PC-3 (cell line): ENCODE measurements at regions of chr2 and their contacts with region 1.

Region 1: GRCh38 chr2:62340994-62341484 is 145.1 kb downstream of the B3GNT2 start:
- DNase-seq: peak; percentile 48
- ATAC-seq: peak; percentile 44
- H3K4me3 ChIP-seq: no peak overlapping the region
- H3K27ac ChIP-seq: no peak overlapping the region
- H3K4me1 ChIP-seq: peaks cover 3% of the 10 kb centered on the region; the same call in 1 of the 2 replicates
- H3K27me3 ChIP-seq: no peaks in the 10 kb centered on the region
- CTCF ChIP-seq: no peak

Region 2: DNA sequence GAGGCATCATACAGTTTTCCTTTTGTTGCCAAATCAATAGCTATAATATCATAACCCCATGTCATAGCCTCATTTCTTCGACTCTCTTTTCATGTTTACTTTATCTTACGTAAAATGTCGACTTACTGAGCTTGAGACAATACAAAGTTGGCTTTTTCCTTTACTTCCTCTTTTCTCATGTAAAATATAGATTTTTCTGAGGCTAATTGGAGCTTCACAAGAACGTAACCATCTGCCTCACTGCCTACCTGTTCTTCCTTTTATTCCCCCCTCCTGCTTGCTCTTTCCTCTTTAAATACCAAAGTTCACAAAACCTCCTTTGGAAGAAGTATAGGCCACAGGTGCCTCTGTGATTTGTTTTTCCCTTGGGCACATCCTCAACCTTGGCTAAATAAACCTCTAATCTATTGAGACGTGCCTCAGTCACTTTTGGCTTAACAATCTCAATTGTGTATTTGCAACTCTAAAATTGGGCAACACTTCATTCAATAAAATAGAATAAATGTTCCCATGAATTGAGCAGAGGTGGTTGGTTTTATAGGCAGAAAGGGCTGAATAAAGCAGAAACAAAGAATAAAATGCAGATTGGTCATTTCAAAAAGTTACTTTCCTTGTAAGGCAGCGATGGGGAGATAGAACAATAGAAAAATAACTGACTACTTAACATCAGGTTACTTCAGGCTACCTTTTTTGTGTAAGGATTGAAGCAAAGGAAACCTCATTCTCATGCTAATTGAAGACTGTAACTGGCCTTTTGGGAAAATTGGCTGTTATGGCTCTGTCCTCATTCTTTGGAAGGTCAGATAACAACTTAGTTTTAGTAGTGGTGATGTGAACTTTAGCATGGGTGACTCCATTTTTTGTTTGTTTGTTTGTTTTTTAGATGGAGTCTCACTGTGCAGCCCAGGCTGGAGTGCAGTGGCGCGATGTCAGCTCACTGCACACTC is 414.2 kb before region 1 on chr2:
- CTCF ChIA-PET with region 1: no interaction called
- POLR2A ChIA-PET with region 1: no interaction called
- intact Hi-C with region 1: no loop called
- DNase-seq: no peak
- ATAC-seq: no peak
- H3K4me3 ChIP-seq: no peak overlapping the region
- H3K27ac ChIP-seq: no peak overlapping the region
- H3K4me1 ChIP-seq: no peaks in the 10 kb centered on the region
- H3K27me3 ChIP-seq: no peaks in the 10 kb centered on the region
- CTCF ChIP-seq: no peak

Region 3: DNA sequence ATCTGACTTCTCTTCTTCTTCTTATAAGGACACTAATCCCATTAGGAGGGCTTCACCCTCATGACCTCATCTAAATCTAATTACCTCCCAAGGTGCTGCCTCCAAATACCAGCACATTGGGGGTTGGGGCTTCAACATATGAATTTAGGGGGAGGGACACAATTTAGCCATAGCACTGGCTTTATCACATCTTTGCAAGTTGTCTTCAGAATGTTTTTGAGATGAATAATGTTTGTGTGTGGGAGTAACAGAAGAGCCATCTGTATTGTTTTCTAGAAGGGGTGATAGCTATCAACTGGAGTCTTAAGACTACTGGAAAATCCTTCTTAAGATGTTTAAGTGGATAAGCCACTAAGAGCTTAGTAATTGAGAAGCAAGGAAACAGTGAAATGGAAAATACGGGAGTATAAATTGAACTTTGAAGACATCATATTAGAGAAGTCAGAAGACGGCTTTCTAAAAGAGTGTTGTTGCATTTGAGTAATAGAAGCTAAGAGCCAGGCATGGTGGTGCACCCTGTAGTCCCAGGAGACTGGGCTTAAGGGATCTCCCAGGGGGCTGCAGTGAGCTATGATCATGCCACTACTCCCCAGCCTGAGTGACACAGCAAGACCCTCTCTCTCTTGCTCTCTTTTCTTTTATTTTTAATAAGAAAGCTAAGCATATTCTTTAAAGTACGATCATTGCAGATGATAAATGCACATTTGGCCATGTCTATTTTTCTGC is 177.8 kb before region 1 on chr2:
- CTCF ChIA-PET with region 1: no interaction called
- POLR2A ChIA-PET with region 1: no interaction called
- intact Hi-C with region 1: no loop called
- DNase-seq: no peak
- ATAC-seq: no peak
- H3K4me3 ChIP-seq: no peak overlapping the region
- H3K27ac ChIP-seq: no peak overlapping the region
- H3K4me1 ChIP-seq: no peaks in the 10 kb centered on the region
- H3K27me3 ChIP-seq: no peaks in the 10 kb centered on the region
- CTCF ChIP-seq: no peak

Region 4: DNA sequence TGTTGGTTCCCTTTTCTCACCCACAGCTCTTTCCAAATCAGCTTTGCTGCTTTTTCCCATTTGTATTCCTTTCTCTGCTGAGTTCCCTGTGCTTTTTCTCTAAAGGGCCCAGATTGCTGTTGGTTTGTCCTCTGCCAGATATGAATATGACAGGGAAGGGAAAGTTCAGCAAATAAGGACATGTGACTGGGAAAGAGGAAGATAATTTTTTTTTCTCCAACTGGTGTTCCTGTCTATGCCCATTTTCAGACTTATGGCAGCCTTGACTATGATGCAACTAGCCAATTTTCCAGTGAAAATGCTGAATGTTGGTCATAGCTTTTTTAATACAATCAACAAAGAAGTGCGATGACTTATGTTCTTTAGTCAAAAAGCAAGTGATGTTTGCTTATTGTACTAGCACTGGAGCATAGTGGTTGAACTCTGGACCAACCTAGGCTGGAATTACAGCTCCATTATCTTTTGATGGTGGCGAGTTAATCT is 1255.4 kb after region 1 on chr2:
- CTCF ChIA-PET with region 1: no interaction called
- POLR2A ChIA-PET with region 1: interaction called, 17 read pairs
- intact Hi-C with region 1: no loop called
- DNase-seq: no peak
- ATAC-seq: no peak
- H3K4me3 ChIP-seq: no peak overlapping the region
- H3K27ac ChIP-seq: no peak overlapping the region
- H3K4me1 ChIP-seq: no peaks in the 10 kb centered on the region
- H3K27me3 ChIP-seq: no peaks in the 10 kb centered on the region
- CTCF ChIP-seq: no peak